Endothelial cell of umbilical vein (primary cell): ENCODE measurements at regions of chr1 and their contacts with region 1.

Region 1: DNA sequence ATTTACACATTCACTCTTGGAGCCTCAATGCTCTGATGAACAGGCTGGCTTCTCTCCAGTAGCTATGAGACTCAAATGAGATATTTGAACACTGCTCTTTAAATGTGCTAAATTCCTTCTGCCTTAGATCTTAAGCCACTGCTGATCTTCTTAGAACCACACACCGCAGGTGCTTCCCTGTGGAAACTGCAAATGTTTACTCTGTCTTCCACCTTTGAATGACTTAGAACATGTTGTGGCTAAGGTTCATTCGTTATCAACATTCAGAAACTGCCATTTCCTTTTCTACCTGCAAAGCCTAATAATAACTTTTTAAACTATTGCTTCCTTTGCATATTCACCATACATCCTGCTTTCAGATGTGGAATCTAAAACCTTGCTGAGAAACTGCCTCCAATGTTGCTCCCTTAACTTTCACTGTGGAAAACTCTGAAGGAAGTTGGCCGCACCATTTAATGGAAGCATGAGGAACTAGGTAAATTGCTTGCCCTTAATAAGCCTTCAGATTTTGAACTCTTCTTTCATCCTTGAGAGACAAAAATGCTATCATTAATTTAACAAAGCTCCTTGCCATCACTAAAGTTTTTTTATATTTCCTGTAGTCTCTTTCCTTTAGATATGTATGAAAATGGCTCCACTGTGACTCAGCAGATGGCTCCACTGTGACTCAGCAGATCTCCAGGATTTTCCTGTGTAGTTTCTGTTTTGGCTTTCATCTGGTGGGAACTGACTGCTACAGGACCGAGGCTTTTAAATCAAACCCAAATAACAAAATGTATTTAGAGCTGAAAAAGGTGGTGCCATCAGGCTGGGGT is 143.8 kb downstream of the TNFSF18 start:
- DNase-seq: peak; percentile 96
- H3K4me3 ChIP-seq: no peak overlapping the region
- H3K27ac ChIP-seq: peak overlapping the region; percentile 88
- H3K4me1 ChIP-seq: peaks cover 84% of the 10 kb centered on the region
- H3K27me3 ChIP-seq: no peaks in the 10 kb centered on the region
- CTCF ChIP-seq: no peak
- POLR2A ChIP-seq: peak; percentile 58

Region 2: GRCh38 chr1:172144445-172145061 is 762.4 kb before region 1 on chr1:
- CTCF ChIA-PET with region 1: no interaction called
- POLR2A ChIA-PET with region 1: no interaction called
- dilution Hi-C with region 1: no loop called
- intact Hi-C with region 1: loop called (anchors 10 kb)
- DNase-seq: peak; percentile 76
- H3K4me3 ChIP-seq: peak overlapping the region; percentile 22 to 96 (median 38)
- H3K27ac ChIP-seq: peak overlapping the region; percentile 87
- H3K4me1 ChIP-seq: peaks cover 57% of the 10 kb centered on the region
- H3K27me3 ChIP-seq: no peaks in the 10 kb centered on the region
- CTCF ChIP-seq: no peak
- POLR2A ChIP-seq: no peak

Region 3: DNA sequence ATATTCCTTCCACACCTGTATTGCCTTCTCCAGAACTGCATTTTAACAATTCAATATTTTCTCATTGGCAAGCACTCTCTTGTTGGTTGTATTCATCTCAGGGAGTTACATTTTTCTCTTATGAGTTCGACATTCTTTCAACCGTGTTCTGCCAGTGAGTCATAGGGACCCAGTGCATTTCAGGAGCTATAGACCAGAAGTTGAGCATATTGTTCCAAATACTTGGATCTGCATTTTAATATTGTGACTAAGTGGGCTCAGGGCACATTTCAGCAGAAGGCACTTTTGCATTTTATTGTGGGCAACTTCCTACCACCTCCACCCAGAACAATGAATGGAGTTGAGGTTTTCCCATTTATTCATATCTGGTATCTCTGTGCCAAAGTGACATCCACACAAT is 11.0 kb after region 1 on chr1:
- CTCF ChIA-PET with region 1: interaction called, 5 read pairs
- POLR2A ChIA-PET with region 1: interaction called, 10 read pairs
- dilution Hi-C with region 1: no loop called
- intact Hi-C with region 1: loop called (anchors 1 kb)
- DNase-seq: peak; percentile 96
- H3K4me3 ChIP-seq: no peak overlapping the region
- H3K27ac ChIP-seq: peak overlapping the region; percentile 84
- H3K4me1 ChIP-seq: peaks cover 62% of the 10 kb centered on the region
- H3K27me3 ChIP-seq: no peaks in the 10 kb centered on the region
- CTCF ChIP-seq: no peak
- POLR2A ChIP-seq: peak; percentile 68

Region 4: DNA sequence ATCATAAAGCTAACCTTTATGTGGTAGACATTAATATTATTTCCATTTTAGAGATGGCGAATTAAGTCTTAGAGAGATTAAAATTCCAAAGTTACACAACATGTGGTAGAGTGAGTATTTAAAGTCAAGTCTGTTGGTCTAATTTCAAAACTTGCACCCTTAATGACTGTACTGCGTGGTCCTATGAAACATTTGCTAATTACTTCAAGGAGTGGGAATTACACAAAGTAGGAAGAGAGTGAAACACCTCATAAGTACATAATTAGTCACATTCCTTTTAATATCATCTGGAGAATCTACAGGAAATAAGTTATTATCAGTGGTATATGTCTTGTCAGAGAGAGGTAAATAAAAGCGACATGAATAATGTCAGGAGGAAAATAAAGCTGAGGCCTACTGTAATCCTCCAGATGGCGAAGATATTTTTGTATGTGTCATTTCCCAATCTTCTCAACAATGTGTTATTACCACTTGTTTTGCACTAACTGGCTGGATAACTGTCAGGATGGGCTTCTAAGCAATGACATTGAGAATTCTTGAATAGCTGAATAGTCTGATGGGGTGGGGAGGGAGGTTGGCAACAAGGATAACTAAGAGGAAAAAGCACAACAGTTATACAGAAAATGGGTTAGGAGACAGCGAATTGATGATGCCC is 48.3 kb after region 1 on chr1:
- CTCF ChIA-PET with region 1: interaction called, 5 read pairs
- POLR2A ChIA-PET with region 1: interaction called, 8 read pairs
- dilution Hi-C with region 1: no loop called
- intact Hi-C with region 1: loop called (anchors 1 kb)
- DNase-seq: peak; percentile 85
- H3K4me3 ChIP-seq: no peak overlapping the region
- H3K27ac ChIP-seq: peak overlapping the region; percentile 90
- H3K4me1 ChIP-seq: peaks cover 43% of the 10 kb centered on the region
- H3K27me3 ChIP-seq: no peaks in the 10 kb centered on the region
- CTCF ChIP-seq: no peak
- POLR2A ChIP-seq: peak; percentile 33

Region 5: DNA sequence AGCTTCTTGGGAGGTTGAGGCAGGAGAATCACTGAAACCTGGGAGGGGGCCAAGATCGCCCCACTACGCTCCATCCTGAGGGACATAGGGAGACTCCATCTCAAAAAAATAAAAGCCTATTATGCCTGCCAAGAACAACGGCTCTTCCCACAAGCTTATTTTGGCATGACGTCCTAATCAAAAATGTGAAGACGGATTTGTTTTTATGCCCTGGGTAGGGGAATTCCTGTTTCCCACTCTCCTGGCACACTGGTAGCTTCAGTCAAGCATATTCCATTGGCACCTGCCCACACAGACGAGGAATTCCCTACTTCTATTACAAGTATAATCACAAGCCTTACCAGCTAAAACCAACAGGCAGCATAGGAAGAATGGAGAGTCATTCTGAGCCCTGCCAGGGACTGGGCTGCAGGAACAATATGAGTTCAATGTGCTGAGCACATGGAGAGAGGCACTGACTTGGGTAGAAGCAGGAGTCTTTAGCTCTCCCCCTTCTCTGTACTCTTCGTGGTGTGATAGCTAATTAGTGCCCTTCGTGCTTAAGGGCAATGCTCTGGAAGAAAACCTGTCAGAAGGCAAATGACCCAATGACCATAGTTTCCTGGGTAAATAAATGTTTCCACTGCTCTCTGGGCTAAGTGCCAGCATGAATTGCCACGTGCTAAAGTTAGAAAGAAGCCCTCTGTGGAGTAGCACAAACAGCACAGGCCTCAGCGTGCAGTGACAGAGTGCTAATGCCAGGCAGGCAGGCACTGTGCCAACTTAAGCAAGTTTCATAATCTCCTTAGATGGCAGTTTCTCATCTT is 283.3 kb after region 1 on chr1:
- CTCF ChIA-PET with region 1: interaction called, 4 read pairs
- POLR2A ChIA-PET with region 1: interaction called, 6 read pairs
- dilution Hi-C with region 1: no loop called
- intact Hi-C with region 1: loop called (anchors 1 kb)
- DNase-seq: peak; percentile 99
- H3K4me3 ChIP-seq: no peak overlapping the region
- H3K27ac ChIP-seq: peak overlapping the region; percentile 98
- H3K4me1 ChIP-seq: peaks cover 58% of the 10 kb centered on the region
- H3K27me3 ChIP-seq: no peaks in the 10 kb centered on the region
- CTCF ChIP-seq: no peak
- POLR2A ChIP-seq: peak; percentile 35

Region 6: GRCh38 chr1:174022080-174022975 is 1115.3 kb after region 1 on chr1 and contains the start of gene RC3H1:
- CTCF ChIA-PET with region 1: interaction called, 4 read pairs
- POLR2A ChIA-PET with region 1: no interaction called
- dilution Hi-C with region 1: no loop called
- intact Hi-C with region 1: loop called (anchors 5 kb)
- DNase-seq: peak; percentile 91
- H3K4me3 ChIP-seq: peak within 1 kb of the TSS; percentile 82 to 91 (median 87)
- H3K27ac ChIP-seq: peak within 1 kb of the TSS; percentile 88
- H3K4me1 ChIP-seq: peaks cover 22% of the 10 kb centered on the region
- H3K27me3 ChIP-seq: no peaks in the 10 kb centered on the region
- CTCF ChIP-seq: no peak
- POLR2A ChIP-seq: peak; percentile 74
- total RNA-seq, gene RC3H1: 30.0 and 41.4 TPM in 2 replicates